ENCODE measurements at regions of chrX and their contacts with region 1.

Region 1: DNA sequence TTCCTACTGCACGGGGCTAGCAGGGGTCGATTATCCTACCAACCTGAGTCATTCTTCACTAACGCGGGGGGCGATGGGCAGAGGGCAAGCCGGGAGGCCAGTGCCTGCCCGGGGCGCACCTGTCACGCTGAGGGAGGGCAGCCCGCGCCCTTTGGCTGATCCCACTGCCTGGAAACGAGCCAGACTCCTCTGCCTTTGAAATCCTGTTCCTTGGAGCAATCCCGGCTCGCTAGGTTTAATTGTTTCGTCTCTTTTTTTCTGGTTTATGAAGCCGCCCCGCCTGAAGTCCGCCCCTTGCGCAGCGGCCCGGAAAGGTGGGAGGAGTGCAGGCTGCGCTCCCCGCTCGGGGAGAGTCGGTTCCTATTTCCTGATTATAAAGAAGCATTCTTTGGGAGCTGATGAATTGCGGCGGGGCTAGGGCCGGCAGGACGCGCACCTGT is 484.3 kb downstream of the BCOR start:
- DNase-seq: peak; percentile 14
- ATAC-seq: peak; percentile 23
- H3K4me3 Mint-ChIP-seq: peak overlapping the region; percentile 67
- H3K27ac Mint-ChIP-seq: no peak overlapping the region
- H3K4me1 Mint-ChIP-seq: peaks cover 27% of the 10 kb centered on the region
- H3K27me3 Mint-ChIP-seq: peaks cover 22% of the 10 kb centered on the region
- CTCF ChIP-seq: no peak

Region 2: DNA sequence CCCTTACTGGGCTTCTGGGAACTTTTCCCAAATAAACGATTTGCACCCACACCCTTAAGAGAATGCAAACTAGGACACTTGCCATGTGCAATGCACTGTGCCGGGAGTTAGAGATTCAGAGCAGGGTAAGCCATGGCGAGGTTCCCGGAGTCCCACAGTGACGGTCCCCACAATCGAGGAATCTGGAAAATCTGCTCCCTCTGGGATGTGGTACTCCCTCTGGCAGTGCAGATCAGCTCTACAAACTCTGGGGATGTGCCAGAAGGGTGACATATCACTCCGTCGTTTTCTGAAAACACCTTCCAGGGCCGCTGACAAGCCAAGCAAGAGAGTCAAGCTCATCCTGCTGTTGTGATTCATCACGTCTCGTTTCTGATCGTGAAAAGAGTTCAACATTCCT is 53.2 kb before region 1 on chrX:
- CTCF ChIA-PET with region 1: no interaction called
- POLR2A ChIA-PET with region 1: interaction called, 3 read pairs
- intact Hi-C with region 1: loop called (anchors 1 kb)
- DNase-seq: no peak
- ATAC-seq: no peak
- H3K4me3 Mint-ChIP-seq: no peak overlapping the region
- H3K27ac Mint-ChIP-seq: no peak overlapping the region
- H3K4me1 Mint-ChIP-seq: peaks cover 22% of the 10 kb centered on the region
- H3K27me3 Mint-ChIP-seq: no peaks in the 10 kb centered on the region
- CTCF ChIP-seq: no peak

Region 3: DNA sequence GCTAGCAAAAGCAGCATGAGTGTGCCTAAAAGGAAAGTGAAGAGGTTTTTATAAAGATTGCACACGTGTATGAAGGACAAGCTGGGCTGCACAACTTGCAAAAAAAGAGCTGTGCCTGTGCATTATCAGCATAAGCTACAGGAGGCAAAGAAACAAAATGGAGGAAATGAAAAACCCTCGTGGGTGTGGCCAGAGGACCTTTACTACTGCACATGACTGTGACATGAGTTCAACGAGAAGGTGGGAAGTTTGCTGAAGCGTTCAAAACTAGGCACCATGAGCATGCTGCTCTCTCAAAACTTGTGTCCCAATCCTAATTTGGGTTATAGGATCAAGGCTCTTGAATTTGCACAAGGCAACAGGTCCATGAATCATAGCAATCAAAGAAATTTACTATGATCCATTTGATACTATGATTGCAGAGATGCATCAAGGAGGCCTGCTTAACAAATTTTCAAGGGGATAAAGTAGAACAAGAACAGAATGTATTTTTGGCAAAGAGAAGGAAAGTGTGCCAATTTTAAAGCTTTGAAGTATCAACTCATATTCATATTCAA is 1071.9 kb after region 1 on chrX:
- CTCF ChIA-PET with region 1: no interaction called
- POLR2A ChIA-PET with region 1: no interaction called
- intact Hi-C with region 1: no loop called
- DNase-seq: no peak
- ATAC-seq: peak; percentile 87
- H3K4me3 Mint-ChIP-seq: peak overlapping the region; percentile 2
- H3K27ac Mint-ChIP-seq: peak overlapping the region; percentile 56
- H3K4me1 Mint-ChIP-seq: peaks cover 22% of the 10 kb centered on the region
- H3K27me3 Mint-ChIP-seq: no peaks in the 10 kb centered on the region
- CTCF ChIP-seq: no peak

Measured in activated B cell treated with CpG ODN at 0.5 μM for 24 hours (primary cell).